MCF 10A (cell line): ENCODE measurements at regions of chr12 and their contacts with region 1.

Region 1: GRCh38 chr12:57726151-57726883 is 12.2 kb downstream of the AGAP2 start:
- DNase-seq: peak; percentile 87
- H3K4me3 Mint-ChIP-seq: peak overlapping the region; percentile 82
- H3K27ac Mint-ChIP-seq: peak overlapping the region; percentile 83
- H3K4me1 Mint-ChIP-seq: no peaks in the 10 kb centered on the region
- H3K27me3 Mint-ChIP-seq: no peaks in the 10 kb centered on the region
- CTCF ChIP-seq: peak; percentile 84

Region 2: GRCh38 chr12:57693659-57694458 is 32.5 kb before region 1 on chr12 and contains the start of gene OS9:
- CTCF ChIA-PET with region 1: interaction called, 13 read pairs
- POLR2A ChIA-PET with region 1: interaction called, 11 read pairs
- intact Hi-C with region 1: no loop called
- DNase-seq: peak; percentile 100
- H3K4me3 Mint-ChIP-seq: no peak within 1 kb of the TSS
- H3K27ac Mint-ChIP-seq: no peak within 1 kb of the TSS
- H3K4me1 Mint-ChIP-seq: no peaks in the 10 kb centered on the region
- H3K27me3 Mint-ChIP-seq: peaks cover 11% of the 10 kb centered on the region
- CTCF ChIP-seq: peak; percentile 48
- total RNA-seq, gene OS9: 125 and 173 TPM in 2 replicates

Region 3: DNA sequence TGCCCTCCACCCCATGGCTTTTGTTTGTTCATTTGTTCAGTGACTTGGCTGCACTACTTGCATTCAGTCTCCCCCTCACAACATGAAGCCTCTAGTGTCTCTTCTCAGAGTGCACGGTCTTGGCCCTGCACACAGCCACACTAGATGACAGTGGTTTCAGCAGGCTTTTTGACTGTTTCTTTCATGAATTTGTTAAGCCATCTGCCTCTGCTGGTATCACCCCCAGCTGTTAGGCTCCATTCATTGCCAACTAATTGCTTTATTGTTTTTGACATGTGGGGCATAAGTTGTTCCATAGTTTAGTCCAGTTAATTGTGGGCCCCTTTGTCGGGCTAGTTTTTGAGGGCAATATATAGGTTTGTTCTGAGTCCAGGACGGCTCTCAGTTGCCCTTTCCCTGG is 13.6 kb before region 1 on chr12:
- CTCF ChIA-PET with region 1: interaction called, 10 read pairs
- POLR2A ChIA-PET with region 1: interaction called, 5 read pairs
- intact Hi-C with region 1: no loop called
- DNase-seq: no peak
- H3K4me3 Mint-ChIP-seq: no peak overlapping the region
- H3K27ac Mint-ChIP-seq: no peak overlapping the region
- H3K4me1 Mint-ChIP-seq: no peaks in the 10 kb centered on the region
- H3K27me3 Mint-ChIP-seq: no peaks in the 10 kb centered on the region
- CTCF ChIP-seq: no peak

Region 4: DNA sequence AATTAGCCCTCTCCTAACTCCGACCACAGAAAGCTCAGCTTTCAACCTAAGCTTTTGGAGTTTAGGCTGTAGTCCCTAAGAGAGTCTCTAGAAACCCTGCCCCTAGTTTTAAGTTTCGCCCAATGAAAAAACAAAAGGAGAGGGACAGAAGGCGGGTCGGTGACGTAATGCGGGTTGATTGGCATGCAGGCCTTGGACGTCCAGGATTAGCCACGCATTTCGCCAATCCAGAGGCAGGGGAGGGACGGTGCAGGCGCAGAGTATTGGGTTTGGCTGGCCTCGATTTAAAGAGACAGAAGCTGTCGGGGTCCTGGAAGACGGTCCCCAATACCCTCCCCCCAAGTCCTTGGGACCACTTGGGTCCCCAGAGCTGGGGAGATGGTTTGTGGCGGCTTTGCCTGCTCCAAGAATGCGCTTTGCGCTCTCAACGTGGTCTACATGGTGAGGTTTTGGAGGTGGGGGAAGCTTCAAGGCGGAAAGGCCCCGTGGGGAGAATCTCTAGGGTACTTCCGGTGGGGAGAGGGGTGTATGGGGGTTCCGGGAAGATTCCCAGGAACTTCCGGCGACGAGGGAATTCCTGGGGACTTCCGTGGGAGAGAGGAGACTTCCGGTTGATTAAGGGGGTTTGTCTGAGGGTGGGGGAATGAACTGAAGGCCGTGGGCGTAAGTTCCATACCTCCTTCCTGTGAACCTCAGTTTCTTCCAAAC is 18.6 kb after region 1 on chr12 and contains the start of gene TSPAN31:
- CTCF ChIA-PET with region 1: interaction called, 11 read pairs
- POLR2A ChIA-PET with region 1: interaction called, 13 read pairs
- intact Hi-C with region 1: loop called (anchors 1 kb)
- DNase-seq: peak; percentile 99
- H3K4me3 Mint-ChIP-seq: peak within 1 kb of the TSS; percentile 100
- H3K27ac Mint-ChIP-seq: peak within 1 kb of the TSS; percentile 100
- H3K4me1 Mint-ChIP-seq: peaks cover 11% of the 10 kb centered on the region
- H3K27me3 Mint-ChIP-seq: peaks cover 16% of the 10 kb centered on the region
- CTCF ChIP-seq: no peak
- total RNA-seq, gene TSPAN31: 24.8 and 30.9 TPM in 2 replicates

Region 5: DNA sequence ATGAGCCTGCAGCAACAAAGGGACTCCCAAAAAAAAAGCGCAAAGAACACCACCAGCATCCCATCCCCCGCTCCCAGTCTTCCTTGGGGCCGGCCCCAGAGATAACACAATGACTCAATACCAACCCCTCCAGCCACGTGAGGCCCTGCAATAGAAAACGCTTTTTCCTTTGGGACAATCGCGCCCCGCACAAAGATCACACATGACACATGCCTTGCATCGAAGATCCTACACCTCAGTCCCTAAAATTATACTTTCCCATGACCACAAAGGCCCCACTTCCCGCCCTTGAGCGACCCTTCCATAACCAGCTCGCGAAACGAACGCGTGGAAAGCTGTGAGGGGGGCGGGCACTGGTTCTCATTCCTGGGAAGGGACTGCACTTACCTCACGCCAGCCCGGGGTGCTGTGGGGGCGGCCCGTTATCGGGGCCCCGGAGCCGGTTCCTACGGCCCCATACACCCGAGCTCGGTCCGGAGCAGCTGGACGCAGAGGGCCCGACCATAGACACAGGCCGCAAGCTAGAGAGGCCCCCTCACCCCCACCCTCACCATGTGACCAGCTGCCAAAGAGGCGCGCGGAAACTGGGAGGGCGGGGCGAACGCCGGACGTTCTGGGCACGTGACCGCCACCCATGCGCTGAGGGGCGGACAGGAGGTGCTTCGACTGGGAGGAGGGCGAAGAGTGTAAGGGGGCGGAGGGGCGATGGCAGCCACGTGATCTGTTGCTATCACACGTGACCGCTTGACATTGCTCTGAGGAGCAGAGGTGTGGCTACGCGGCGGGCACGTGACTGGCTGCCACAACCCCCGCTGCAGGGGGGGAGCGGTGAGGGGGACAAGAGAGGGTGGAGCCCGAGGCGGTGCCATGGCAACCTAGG is 25.7 kb after region 1 on chr12 and contains the start of gene CDK4:
- CTCF ChIA-PET with region 1: interaction called, 11 read pairs
- POLR2A ChIA-PET with region 1: no interaction called
- intact Hi-C with region 1: no loop called
- DNase-seq: peak; percentile 99
- H3K4me3 Mint-ChIP-seq: peak within 1 kb of the TSS; percentile 92
- H3K27ac Mint-ChIP-seq: peak within 1 kb of the TSS; percentile 93
- H3K4me1 Mint-ChIP-seq: peaks cover 40% of the 10 kb centered on the region
- H3K27me3 Mint-ChIP-seq: no peaks in the 10 kb centered on the region
- CTCF ChIP-seq: no peak
- total RNA-seq, gene CDK4: 117 and 123 TPM in 2 replicates